SK-N-SH (cell line): ENCODE measurements at regions of chr19 and their contacts with region 1.

Region 1: GRCh38 chr19:39110263-39110967 is 15.2 kb upstream of the PAK4 start:
- DNase-seq: peak; percentile 80
- H3K4me3 ChIP-seq: no peak overlapping the region
- H3K27ac ChIP-seq: no peak overlapping the region
- H3K4me1 ChIP-seq: peaks cover 0 to 8% of the 10 kb centered on the region in 2 experiments; a peak in 1 of 4 replicates
- H3K27me3 ChIP-seq: no peaks in the 10 kb centered on the region
- CTCF ChIP-seq: peak; percentile 77
- EP300 ChIP-seq: no peak
- RAD21 ChIP-seq: peak; percentile 75

Region 2: DNA sequence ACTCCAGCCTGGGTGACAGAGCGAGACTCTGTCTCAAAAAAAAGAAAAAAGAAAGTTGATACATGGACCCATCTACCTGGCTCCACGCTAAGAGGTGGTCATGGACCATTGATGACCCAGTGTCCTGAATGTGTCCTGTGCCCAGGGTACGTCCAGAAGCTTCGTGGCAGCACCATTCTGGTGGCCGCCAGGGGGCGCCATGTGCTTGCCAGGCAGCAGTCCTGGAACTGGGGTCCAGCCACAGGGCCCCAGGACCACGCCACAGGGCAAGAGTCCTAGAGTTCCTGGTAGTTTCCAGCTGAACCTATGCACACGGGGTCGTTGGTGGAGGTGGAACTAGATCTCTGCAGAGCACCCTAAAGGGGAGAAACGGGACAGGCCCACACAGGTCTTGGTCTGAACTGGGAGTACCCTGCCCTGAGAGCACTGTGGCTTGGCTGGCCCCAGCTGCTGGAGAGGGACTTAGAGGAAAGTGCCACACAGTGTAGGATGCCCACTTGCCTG is 58.1 kb before region 1 on chr19:
- CTCF ChIA-PET with region 1: interaction called, 30 read pairs
- POLR2A ChIA-PET with region 1: no interaction called
- DNase-seq: peak; percentile 75
- H3K4me3 ChIP-seq: peak overlapping the region in 1 of 2 experiments; percentile 20; a peak in 1 of 4 replicates
- H3K27ac ChIP-seq: no peak overlapping the region
- H3K4me1 ChIP-seq: no peaks in the 10 kb centered on the region; a peak in 1 of 4 replicates
- H3K27me3 ChIP-seq: no peaks in the 10 kb centered on the region
- CTCF ChIP-seq: peak; percentile 92
- EP300 ChIP-seq: no peak
- RAD21 ChIP-seq: peak; percentile 66

Region 3: GRCh38 chr19:39098365-39099269 is 11.8 kb before region 1 on chr19:
- CTCF ChIA-PET with region 1: interaction called, 23 read pairs
- POLR2A ChIA-PET with region 1: no interaction called
- DNase-seq: peak; percentile 52
- H3K4me3 ChIP-seq: no peak overlapping the region; a peak in 1 of 4 replicates
- H3K27ac ChIP-seq: no peak overlapping the region
- H3K4me1 ChIP-seq: no peaks in the 10 kb centered on the region
- H3K27me3 ChIP-seq: no peaks in the 10 kb centered on the region
- CTCF ChIP-seq: no peak
- EP300 ChIP-seq: no peak
- RAD21 ChIP-seq: no peak

Region 4: DNA sequence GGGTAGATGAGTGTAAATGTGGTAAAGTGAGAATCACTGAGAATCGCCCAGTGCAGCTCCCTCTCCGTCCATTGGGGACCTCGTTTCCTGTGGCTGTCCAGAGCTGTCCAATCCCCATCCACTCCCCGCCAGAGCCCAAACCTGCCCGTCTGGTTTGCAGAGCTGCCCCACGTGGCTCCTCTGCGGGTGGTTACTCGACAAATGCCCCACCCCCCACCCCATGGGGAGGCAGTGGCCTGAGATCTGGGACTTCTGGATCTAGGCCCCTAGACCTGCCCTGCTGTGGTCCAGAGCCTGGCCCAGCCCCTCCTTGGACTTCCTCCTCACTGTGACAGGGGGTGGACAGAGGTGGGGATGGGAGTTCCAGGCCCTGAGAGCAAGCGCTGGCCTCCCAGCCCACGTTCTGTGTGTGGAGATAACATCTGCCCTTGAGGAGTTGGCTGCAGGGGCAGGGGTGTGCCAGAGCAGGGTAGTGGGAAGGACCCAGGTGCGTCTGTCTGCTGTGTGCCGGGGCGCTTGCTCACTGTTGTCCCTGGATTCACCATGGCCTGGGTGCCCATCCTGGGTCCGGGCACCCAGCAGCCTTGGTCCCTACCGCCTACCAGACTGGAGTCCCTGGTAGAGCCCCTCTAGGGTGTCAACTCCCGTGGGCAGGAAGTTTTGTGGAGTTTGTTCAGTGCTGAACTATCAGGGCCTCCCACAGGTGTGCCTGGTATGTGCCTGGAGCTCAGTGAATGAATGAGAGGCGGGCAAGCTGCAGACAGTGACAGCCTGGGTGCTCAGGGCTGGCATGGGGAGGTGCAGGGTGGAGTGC is 44.4 kb after region 1 on chr19:
- CTCF ChIA-PET with region 1: no interaction called
- POLR2A ChIA-PET with region 1: no interaction called
- DNase-seq: peak; percentile 75
- H3K4me3 ChIP-seq: no peak overlapping the region
- H3K27ac ChIP-seq: peak overlapping the region in 1 of 2 experiments; percentile 7; a peak in 1 of 4 replicates
- H3K4me1 ChIP-seq: peaks cover 0 to 48% of the 10 kb centered on the region in 2 experiments; a peak in 1 of 4 replicates
- H3K27me3 ChIP-seq: no peaks in the 10 kb centered on the region
- CTCF ChIP-seq: no peak
- EP300 ChIP-seq: no peak
- RAD21 ChIP-seq: no peak

Region 5: DNA sequence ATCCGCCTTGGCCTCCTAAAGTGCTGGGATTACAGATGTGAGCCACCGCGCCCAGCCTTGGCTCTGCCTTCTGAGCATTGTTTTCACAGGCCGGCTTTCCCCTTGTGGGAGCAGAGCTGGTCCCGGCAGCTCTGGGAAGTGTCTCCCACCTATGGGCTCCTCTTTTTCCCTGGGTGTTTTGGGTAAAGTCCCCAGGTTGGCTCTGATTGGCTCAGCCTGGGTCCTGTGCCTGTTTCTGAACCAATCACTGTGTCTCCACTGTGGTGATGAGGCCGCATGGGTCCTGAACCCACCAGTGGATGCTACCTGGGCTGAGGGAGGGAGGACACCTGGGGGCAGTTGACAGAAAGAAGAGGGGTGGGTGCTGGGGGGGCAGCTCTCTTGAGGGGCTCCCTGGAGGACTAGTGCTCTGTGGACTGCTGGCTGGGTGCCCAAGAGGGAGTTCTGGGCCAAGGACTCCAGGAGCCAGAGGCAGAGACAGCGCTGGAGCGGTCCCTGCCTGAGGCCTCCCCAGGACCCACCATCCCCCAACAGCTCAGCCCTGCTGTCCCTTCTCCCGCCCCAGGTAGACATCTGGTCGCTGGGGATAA is 66.8 kb after region 1 on chr19:
- CTCF ChIA-PET with region 1: interaction called, 10 read pairs
- POLR2A ChIA-PET with region 1: no interaction called
- DNase-seq: no peak
- H3K4me3 ChIP-seq: no peak overlapping the region
- H3K27ac ChIP-seq: no peak overlapping the region; a peak in 1 of 4 replicates
- H3K4me1 ChIP-seq: peaks cover 0 to 24% of the 10 kb centered on the region in 2 experiments; a peak in 1 of 4 replicates
- H3K27me3 ChIP-seq: no peaks in the 10 kb centered on the region
- CTCF ChIP-seq: no peak
- EP300 ChIP-seq: no peak
- RAD21 ChIP-seq: no peak

Region 6: GRCh38 chr19:39328046-39328705 is 217.8 kb after region 1 on chr19:
- CTCF ChIA-PET with region 1: interaction called, 64 read pairs
- POLR2A ChIA-PET with region 1: no interaction called
- DNase-seq: peak; percentile 84
- H3K4me3 ChIP-seq: no peak overlapping the region; a peak in 1 of 4 replicates
- H3K27ac ChIP-seq: no peak overlapping the region
- H3K4me1 ChIP-seq: no peaks in the 10 kb centered on the region
- H3K27me3 ChIP-seq: no peaks in the 10 kb centered on the region
- CTCF ChIP-seq: peak; percentile 97
- EP300 ChIP-seq: no peak
- RAD21 ChIP-seq: peak; percentile 95

Region 7: GRCh38 chr19:39335168-39335548 is 224.7 kb after region 1 on chr19:
- CTCF ChIA-PET with region 1: interaction called, 12 read pairs
- POLR2A ChIA-PET with region 1: no interaction called
- DNase-seq: peak; percentile 14
- H3K4me3 ChIP-seq: no peak overlapping the region
- H3K27ac ChIP-seq: no peak overlapping the region
- H3K4me1 ChIP-seq: no peaks in the 10 kb centered on the region
- H3K27me3 ChIP-seq: no peaks in the 10 kb centered on the region
- CTCF ChIP-seq: no peak
- EP300 ChIP-seq: no peak
- RAD21 ChIP-seq: no peak